ENCODE measurements at regions of chr21 and their contacts with region 1.

Region 1: DNA sequence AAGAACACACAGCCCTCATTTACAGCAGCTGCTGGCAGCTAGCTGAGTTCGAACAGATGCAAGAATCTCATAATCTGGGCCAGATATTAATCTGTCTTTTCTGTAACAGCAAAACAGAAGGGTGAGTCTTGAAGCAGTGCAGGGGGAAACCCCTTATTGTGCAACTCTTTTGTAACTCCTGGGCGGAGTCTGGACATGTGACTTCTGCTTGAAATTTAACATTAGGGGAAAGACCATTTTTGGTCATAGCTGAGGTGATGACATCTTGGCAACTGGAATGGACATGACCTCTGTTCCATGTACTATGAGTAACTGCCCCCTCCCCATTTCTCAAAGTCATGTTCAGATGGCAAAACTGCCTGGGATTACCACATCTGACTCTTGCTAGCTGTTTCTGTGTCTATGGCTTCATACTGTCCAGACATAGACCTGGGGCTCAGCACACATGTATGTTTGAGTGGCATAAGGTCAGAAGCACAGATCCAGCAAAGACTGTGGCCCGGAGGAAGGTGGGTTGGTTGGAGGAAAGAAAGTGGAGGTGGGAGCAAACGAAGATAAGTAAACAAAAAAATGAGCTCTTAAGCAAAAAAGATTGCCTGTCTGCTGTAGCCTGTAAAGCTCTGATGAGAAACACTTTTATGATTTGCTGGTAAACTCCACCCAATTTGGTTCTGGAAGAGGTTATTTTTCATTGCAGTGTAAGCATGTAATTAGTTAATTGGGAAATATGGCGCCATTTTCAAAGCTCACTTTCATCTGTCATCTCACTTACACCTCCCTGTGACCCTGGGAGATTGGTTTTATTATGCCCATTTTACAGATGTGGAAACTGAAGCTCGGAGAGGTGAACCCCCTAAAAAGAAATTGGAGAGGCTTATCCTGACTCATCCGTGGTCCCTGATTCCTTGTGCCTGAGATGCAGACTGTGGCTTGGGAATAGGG is 26.1 kb downstream of the ETS2 start:
- DNase-seq: peak; percentile 99
- H3K4me3 Mint-ChIP-seq: peak overlapping the region; percentile 7
- H3K27ac Mint-ChIP-seq: peak overlapping the region; percentile 90
- H3K4me1 Mint-ChIP-seq: peaks cover 24% of the 10 kb centered on the region
- H3K27me3 Mint-ChIP-seq: no peaks in the 10 kb centered on the region
- CTCF ChIP-seq: no peak

Region 2: DNA sequence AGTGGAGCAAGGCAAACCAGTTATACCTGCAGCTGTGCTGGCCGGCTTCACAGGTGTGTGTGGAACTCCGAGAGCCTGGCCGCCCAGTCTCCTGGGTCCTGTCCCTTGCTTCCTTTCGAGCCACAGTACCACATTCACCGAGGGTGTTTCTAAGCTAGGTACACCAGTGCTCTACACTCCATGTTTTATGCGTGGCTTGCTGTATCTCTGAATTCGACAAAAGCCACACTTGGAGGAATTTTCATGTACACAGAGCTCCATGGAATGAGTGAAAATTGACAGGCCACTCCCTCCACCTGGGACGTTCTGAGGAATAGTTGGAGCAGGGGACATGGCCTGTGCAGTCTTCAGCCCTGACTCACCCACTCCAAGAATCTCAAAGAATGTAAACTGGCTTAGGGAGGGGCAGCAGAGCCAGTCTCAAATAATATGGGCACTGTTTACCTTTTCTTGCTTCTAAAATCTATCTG is 12.0 kb before region 1 on chr21:
- CTCF ChIA-PET with region 1: interaction called, 4 read pairs
- POLR2A ChIA-PET with region 1: interaction called, 31 read pairs
- intact Hi-C with region 1: no loop called
- DNase-seq: peak; percentile 71
- H3K4me3 Mint-ChIP-seq: peak overlapping the region; percentile 40
- H3K27ac Mint-ChIP-seq: peak overlapping the region; percentile 75
- H3K4me1 Mint-ChIP-seq: peaks cover 35% of the 10 kb centered on the region
- H3K27me3 Mint-ChIP-seq: no peaks in the 10 kb centered on the region
- CTCF ChIP-seq: no peak

Region 3: DNA sequence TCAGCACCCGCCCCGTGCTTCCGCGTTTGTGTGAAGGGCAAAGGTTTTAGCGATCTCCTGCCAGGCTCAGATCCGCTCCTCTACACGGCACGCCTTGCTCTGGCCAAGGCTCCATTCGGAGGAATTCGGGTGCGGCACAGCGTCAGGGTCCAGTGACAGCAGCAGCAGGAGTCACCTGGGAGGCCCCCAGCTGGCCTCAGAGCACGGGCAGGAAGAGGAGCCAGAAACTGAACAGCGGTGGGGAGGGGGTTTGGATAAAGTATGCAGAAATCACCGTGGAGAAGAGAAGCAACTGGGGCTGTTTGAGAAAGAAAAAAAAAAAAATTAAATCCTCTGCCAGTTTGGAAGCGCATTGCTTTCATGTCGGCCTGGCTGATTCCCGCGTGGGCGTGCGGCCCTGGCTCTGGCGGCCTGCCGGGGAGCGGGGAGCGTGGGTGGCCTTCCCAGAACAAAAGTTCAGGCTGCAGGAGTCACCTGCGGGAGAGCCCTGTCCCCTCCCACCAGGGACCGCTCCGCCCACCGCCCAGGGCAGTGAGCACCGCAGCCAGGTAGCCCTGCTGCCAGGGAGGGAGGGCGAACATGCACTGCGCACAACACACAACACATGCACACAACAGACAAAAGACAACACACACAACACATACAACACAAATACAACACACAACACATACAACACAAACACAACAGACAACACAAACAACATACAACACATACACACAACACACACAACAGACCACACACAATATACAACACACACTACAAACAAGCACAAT is 81.5 kb after region 1 on chr21:
- CTCF ChIA-PET with region 1: no interaction called
- POLR2A ChIA-PET with region 1: interaction called, 103 read pairs
- intact Hi-C with region 1: no loop called
- DNase-seq: peak; percentile 92
- H3K4me3 Mint-ChIP-seq: no peak overlapping the region
- H3K27ac Mint-ChIP-seq: no peak overlapping the region
- H3K4me1 Mint-ChIP-seq: peaks cover 9% of the 10 kb centered on the region
- H3K27me3 Mint-ChIP-seq: no peaks in the 10 kb centered on the region
- CTCF ChIP-seq: no peak

Region 4: GRCh38 chr21:39048064-39048463 is 216.3 kb after region 1 on chr21:
- CTCF ChIA-PET with region 1: no interaction called
- POLR2A ChIA-PET with region 1: interaction called, 11 read pairs
- intact Hi-C with region 1: loop called (anchors 5 kb)
- DNase-seq: peak; percentile 94
- H3K4me3 Mint-ChIP-seq: peak overlapping the region; percentile 44
- H3K27ac Mint-ChIP-seq: peak overlapping the region; percentile 99
- H3K4me1 Mint-ChIP-seq: peaks cover 38% of the 10 kb centered on the region
- H3K27me3 Mint-ChIP-seq: no peaks in the 10 kb centered on the region
- CTCF ChIP-seq: no peak